Sigmoid colon (tissue), 7 donors: ENCODE measurements at regions of chr9 and their contacts with region 1.

Region 1: DNA sequence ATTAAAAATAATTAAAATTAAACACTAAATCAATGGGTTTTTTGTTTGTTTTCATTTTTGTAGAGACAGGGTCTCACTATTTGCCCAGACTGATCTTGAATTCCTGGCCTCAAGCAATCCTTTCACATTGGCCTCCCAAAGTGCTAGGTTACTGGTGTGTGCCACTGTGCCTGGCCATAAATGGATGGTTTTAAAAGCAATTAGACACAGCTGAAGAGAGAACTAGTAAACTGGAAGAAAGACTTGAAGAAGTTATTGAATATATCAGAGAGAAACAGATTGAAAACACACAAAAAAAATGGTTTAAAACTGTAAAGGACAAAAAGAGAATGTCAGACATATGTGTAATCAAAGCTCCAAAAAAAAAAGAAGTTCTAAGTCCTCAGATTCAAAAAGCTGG is 83.0 kb downstream of the DENND1A start:
- DNase-seq: no peak
- H3K4me3 ChIP-seq: no peak overlapping the region
- H3K27ac ChIP-seq: no peak overlapping the region
- H3K4me1 ChIP-seq: no peaks in the 10 kb centered on the region
- H3K27me3 ChIP-seq: no peaks in the 10 kb centered on the region
- CTCF ChIP-seq: no peak
- EP300 ChIP-seq: no peak
- POLR2A ChIP-seq: no peak

Region 2: DNA sequence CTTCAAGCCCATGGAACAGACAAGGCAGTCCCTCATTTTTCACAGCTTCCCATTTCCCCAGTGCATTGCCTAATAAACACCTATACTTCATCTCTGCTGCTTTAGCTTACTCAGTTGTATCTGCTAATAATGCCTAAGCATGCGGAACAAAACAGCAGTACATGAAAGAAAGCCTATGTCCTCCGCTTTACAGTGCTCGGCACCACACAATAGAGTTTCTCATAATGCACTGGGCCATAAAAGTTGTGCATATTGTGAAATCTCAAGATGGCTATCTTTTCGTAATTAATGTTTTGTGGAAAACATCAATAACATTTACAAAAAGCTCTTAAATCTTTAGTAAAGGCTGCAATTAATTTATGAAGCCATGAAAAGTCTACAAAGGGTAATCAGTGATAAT is 13.6 kb after region 1 on chr9:
- intact Hi-C with region 1: loop called (anchors 1 kb)
- DNase-seq: no peak
- H3K4me3 ChIP-seq: no peak overlapping the region
- H3K27ac ChIP-seq: no peak overlapping the region
- H3K4me1 ChIP-seq: peaks cover 0 to 9% (median 3%) of the 10 kb centered on the region in 4 donors
- H3K27me3 ChIP-seq: no peaks in the 10 kb centered on the region
- CTCF ChIP-seq: no peak
- EP300 ChIP-seq: no peak
- POLR2A ChIP-seq: no peak